MCF 10A (cell line): ENCODE measurements at regions of chr10 and their contacts with region 1.

Region 1: GRCh38 chr10:3467052-3467951 is 294.7 kb upstream of the PITRM1 start:
- DNase-seq: peak; percentile 97
- H3K4me3 Mint-ChIP-seq: peak overlapping the region; percentile 79
- H3K27ac Mint-ChIP-seq: peak overlapping the region; percentile 100
- H3K4me1 Mint-ChIP-seq: peaks cover 46% of the 10 kb centered on the region
- H3K27me3 Mint-ChIP-seq: no peaks in the 10 kb centered on the region
- CTCF ChIP-seq: peak; percentile 55

Region 2: GRCh38 chr10:3197348-3198003 is 269.8 kb before region 1 on chr10:
- CTCF ChIA-PET with region 1: no interaction called
- POLR2A ChIA-PET with region 1: interaction called, 3 read pairs
- intact Hi-C with region 1: loop called (anchors 5 kb)
- DNase-seq: peak; percentile 80
- H3K4me3 Mint-ChIP-seq: peak overlapping the region; percentile 69
- H3K27ac Mint-ChIP-seq: peak overlapping the region; percentile 61
- H3K4me1 Mint-ChIP-seq: peaks cover 16% of the 10 kb centered on the region
- H3K27me3 Mint-ChIP-seq: no peaks in the 10 kb centered on the region
- CTCF ChIP-seq: peak; percentile 79

Region 3: GRCh38 chr10:3452173-3452626 is 15.1 kb before region 1 on chr10:
- CTCF ChIA-PET with region 1: interaction called, 3 read pairs
- POLR2A ChIA-PET with region 1: interaction called, 40 read pairs
- intact Hi-C with region 1: no loop called
- DNase-seq: peak; percentile 70
- H3K4me3 Mint-ChIP-seq: peak overlapping the region; percentile 18
- H3K27ac Mint-ChIP-seq: peak overlapping the region; percentile 78
- H3K4me1 Mint-ChIP-seq: peaks cover 34% of the 10 kb centered on the region
- H3K27me3 Mint-ChIP-seq: no peaks in the 10 kb centered on the region
- CTCF ChIP-seq: peak; percentile 20

Region 4: DNA sequence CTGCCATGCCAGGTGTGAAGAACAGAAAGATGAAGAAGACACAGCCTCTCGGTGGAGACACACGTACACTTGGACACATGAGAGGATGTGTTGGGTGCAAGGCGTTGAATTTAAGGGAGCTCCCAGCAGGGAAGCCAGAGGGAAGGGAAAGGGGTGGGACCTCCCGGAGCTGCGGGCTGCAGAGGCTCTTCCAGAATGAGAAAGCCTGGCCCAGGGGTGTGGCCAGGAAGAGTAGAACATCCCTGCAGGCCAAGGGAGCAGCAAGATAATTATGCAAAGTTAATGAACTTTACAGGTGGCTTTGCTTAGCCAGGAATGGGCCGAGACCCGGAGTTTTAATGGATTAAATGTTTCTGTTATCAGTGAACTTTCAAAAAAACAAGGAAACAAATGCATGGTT is 47.4 kb after region 1 on chr10:
- CTCF ChIA-PET with region 1: no interaction called
- POLR2A ChIA-PET with region 1: no interaction called
- intact Hi-C with region 1: no loop called
- DNase-seq: no peak
- H3K4me3 Mint-ChIP-seq: no peak overlapping the region
- H3K27ac Mint-ChIP-seq: no peak overlapping the region
- H3K4me1 Mint-ChIP-seq: no peaks in the 10 kb centered on the region
- H3K27me3 Mint-ChIP-seq: no peaks in the 10 kb centered on the region
- CTCF ChIP-seq: no peak

Region 5: DNA sequence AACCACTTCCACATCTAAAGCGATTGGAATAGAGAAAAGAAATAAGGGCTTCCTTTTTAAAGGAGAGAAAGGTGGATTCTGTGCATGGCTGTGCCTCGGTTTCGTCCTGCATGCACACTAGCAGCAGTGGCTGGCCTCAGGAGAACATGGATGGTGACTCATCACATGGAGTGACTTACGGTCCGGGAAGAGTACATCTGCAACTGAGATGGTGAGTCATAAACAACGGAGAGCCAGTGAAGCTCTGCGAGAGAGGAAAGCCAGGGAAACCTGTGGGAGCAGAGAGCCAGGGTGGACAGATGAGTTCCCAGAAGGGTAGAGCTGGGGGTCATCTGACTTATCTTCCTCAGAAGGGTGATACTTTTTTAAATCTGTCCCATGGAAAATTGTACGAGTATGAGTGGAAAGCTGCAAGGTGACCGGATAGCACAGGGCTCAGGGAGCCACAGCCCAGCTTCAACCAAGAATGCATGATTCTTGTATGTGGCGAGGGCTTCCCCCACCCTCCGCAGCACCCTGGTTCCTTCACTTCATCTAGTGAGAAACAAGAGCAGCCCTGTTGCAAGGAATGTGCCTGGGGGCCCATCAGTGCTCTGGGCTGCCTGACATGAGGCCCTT is 58.6 kb after region 1 on chr10:
- CTCF ChIA-PET with region 1: interaction called, 3 read pairs
- POLR2A ChIA-PET with region 1: interaction called, 3 read pairs
- intact Hi-C with region 1: loop called (anchors 5 kb)
- DNase-seq: peak; percentile 96
- H3K4me3 Mint-ChIP-seq: no peak overlapping the region
- H3K27ac Mint-ChIP-seq: no peak overlapping the region
- H3K4me1 Mint-ChIP-seq: peaks cover 19% of the 10 kb centered on the region
- H3K27me3 Mint-ChIP-seq: no peaks in the 10 kb centered on the region
- CTCF ChIP-seq: no peak

Region 6: DNA sequence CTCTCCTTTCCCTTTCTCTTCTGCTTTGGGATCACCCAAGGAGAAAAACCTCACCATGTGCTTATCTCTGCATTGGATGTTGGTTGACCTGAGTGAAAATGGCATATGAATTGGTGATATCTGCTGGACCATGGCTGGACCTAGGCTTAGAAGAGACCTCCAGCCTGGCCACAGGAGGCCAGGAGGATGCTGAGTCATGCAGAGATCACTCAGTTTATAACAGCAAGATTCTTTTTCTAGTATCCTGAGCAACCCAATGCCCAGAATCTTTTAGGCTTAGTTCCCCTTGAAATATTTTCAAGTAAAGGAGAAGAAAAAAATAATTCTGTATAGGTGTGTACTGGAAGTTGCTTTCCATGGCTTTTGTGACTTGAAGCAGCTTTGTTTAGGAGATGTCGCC is 81.4 kb after region 1 on chr10:
- CTCF ChIA-PET with region 1: no interaction called
- POLR2A ChIA-PET with region 1: no interaction called
- intact Hi-C with region 1: no loop called
- DNase-seq: no peak
- H3K4me3 Mint-ChIP-seq: no peak overlapping the region
- H3K27ac Mint-ChIP-seq: no peak overlapping the region
- H3K4me1 Mint-ChIP-seq: no peaks in the 10 kb centered on the region
- H3K27me3 Mint-ChIP-seq: no peaks in the 10 kb centered on the region
- CTCF ChIP-seq: no peak

Region 7: GRCh38 chr10:3668276-3668965 is 201.1 kb after region 1 on chr10:
- CTCF ChIA-PET with region 1: no interaction called
- POLR2A ChIA-PET with region 1: no interaction called
- intact Hi-C with region 1: loop called (anchors 5 kb)
- DNase-seq: peak; percentile 85
- H3K4me3 Mint-ChIP-seq: peak overlapping the region; percentile 67
- H3K27ac Mint-ChIP-seq: peak overlapping the region; percentile 94
- H3K4me1 Mint-ChIP-seq: peaks cover 12% of the 10 kb centered on the region
- H3K27me3 Mint-ChIP-seq: no peaks in the 10 kb centered on the region
- CTCF ChIP-seq: no peak

Region 8: DNA sequence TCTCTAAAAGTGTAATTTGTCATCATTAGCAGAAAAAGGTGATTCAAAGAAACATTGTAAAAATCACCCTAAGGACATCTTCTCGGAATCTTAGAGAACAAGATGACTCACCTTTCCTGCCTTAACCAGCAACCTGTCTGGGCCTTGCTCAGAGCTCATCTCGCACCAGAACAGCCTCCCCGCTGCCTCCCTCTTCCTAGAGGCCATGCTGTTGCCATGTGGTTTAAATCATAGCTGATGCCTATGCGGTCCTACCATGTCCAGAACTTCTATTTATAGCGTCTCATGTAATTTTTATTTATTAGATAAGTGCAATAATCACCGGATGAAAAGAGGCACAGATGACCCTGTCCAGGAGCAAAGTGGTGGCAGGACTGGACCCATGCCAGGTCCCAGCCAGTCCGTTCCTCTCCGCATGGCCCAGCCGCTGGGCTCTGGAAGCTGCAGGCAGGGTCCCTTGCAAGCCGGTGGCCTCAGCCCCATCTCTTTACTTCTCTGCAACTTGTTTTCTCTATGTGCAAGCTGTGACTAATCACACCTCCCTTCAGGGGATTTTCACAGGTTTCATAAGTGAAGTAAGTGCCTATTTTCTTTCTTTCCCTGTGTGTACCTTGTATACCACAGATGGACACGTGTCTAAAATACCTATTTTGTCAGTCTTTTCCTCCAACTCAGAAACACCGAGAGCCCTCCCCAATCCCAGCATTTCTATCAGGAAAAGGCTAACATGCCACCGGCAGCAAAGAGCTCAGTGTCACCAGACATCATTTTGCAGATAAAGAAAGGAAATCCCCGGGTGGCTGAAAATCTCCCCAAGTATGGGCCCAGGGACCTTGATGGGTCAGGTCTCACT is 290.6 kb after region 1 on chr10:
- CTCF ChIA-PET with region 1: no interaction called
- POLR2A ChIA-PET with region 1: interaction called, 44 read pairs
- intact Hi-C with region 1: no loop called
- DNase-seq: peak; percentile 91
- H3K4me3 Mint-ChIP-seq: peak overlapping the region; percentile 48
- H3K27ac Mint-ChIP-seq: peak overlapping the region; percentile 62
- H3K4me1 Mint-ChIP-seq: peaks cover 52% of the 10 kb centered on the region
- H3K27me3 Mint-ChIP-seq: no peaks in the 10 kb centered on the region
- CTCF ChIP-seq: no peak

Region 9: GRCh38 chr10:4767033-4767814 is 1299.9 kb after region 1 on chr10:
- CTCF ChIA-PET with region 1: no interaction called
- POLR2A ChIA-PET with region 1: interaction called, 5 read pairs
- intact Hi-C with region 1: loop called (anchors 2 kb)
- DNase-seq: peak; percentile 57
- H3K4me3 Mint-ChIP-seq: no peak overlapping the region
- H3K27ac Mint-ChIP-seq: peak overlapping the region; percentile 76
- H3K4me1 Mint-ChIP-seq: peaks cover 31% of the 10 kb centered on the region
- H3K27me3 Mint-ChIP-seq: no peaks in the 10 kb centered on the region
- CTCF ChIP-seq: peak; percentile 78